SK-N-SH (cell line): ENCODE measurements at regions of chr11 and their contacts with region 1.

Region 1: DNA sequence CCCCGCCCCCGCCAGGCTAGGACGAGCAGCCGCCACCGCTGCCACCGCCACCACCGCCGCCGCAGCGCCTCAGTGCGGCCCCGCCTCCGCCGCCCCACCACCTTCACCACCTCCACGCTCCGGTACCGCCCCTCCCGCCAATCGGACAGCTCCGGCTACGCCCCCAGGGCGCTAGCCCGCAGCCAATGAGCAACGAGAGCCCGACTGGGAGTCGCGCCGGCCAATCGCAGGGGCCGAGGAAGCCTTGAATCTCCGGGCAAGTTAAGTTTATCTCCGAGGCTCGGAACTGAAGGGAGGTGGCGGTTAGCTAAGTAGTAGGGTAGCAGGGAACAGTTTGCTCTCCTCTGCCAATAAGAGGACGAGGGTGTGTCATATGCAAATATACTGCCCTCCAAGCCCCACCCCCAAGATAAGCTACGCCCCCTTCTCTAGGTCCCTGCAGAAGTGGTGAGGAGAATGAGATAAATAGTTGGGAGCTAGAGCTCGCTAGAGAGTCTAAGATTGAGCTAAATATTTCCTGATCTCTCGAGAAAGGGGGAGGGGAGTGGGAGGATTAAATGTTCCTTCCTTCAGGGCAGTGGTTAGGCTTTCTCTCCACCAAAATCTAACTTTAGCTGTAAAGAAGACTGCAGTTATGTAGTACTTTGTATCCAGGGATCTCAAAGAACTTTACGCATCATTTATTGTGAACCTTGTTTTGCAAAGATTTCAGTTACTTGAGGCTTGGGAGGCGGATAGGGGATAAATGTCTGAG is at the start of gene SESN3:
- DNase-seq: peak; percentile 93
- H3K4me3 ChIP-seq: peak within 1 kb of the TSS; percentile 79 to 91
- H3K27ac ChIP-seq: peak within 1 kb of the TSS; percentile 31 to 99; a peak in 3 of 4 replicates
- H3K4me1 ChIP-seq: peaks cover 11 to 18% of the 10 kb centered on the region in 2 experiments; a peak in 3 of 4 replicates
- H3K27me3 ChIP-seq: no peaks in the 10 kb centered on the region
- CTCF ChIP-seq: no peak
- EP300 ChIP-seq: peak; percentile 18 to 80; a peak in 3 of 4 replicates
- RAD21 ChIP-seq: peak; percentile 55
- polyA plus RNA-seq, gene SESN3: 1.7 and 2.2 TPM in 2 replicates

Region 2: GRCh38 chr11:95254131-95254704 is 22.9 kb after region 1 on chr11:
- CTCF ChIA-PET with region 1: no interaction called
- POLR2A ChIA-PET with region 1: interaction called, 17 read pairs
- DNase-seq: peak; percentile 72
- H3K4me3 ChIP-seq: peak overlapping the region; percentile 44 to 58; a peak in 3 of 4 replicates
- H3K27ac ChIP-seq: peak overlapping the region in 1 of 2 experiments; percentile 94; a peak in 2 of 4 replicates
- H3K4me1 ChIP-seq: peaks cover 5 to 25% of the 10 kb centered on the region in 2 experiments; a peak in 3 of 4 replicates
- H3K27me3 ChIP-seq: no peaks in the 10 kb centered on the region
- CTCF ChIP-seq: no peak
- EP300 ChIP-seq: peak; percentile 5 to 73; a peak in 2 of 4 replicates
- RAD21 ChIP-seq: peak; percentile 19; the same call in 1 of the 2 replicates